CD8-positive, alpha-beta T cell (primary cell): ENCODE measurements at regions of chr5 and their contacts with region 1.

Region 1: DNA sequence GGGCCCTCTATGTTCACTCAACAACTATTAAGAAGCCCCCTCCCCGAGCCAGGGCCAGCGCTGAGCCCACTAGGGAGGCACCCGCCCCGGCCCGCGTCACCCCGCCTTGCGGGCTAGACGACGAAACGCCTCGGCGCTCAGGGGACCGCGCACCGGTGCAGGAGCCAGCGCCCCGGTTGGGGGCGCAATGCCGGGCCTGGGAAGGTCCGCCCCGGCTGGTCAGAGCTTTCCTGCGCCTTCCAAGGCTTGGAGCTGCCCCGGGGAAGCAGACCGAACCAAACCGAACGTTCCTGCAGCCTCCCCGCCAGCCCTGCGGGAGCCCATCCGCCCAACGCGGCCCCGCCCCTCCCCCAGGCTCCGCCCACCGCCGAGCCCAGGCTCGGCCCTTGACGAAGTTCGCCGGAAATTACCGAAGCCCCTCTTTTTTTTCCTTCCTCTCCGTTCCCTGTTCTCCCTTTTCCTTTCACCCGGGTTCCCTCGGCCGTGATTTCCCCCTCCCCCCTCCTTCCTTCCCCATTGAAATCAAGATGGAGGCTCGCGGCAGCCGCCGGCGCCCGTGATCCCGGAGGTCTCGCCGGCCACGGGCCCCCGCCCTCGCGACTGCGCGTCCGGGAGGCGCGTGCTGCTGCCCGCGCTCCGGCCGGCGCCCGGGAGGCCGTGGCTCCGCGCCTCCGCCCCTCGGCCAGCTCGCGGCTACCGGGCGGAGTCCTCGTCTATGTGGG is at the start of gene TRIO:
- DNase-seq: peak; percentile 32 to 88 (median 77)
- ATAC-seq: peak; percentile 71
- H3K4me3 ChIP-seq: peak within 1 kb of the TSS; percentile 56 to 93
- H3K4me3 Mint-ChIP-seq: peak within 1 kb of the TSS; percentile 84
- H3K27ac ChIP-seq: no peak within 1 kb of the TSS
- H3K27ac Mint-ChIP-seq: no peak within 1 kb of the TSS
- H3K4me1 ChIP-seq: peaks cover 13% of the 10 kb centered on the region
- H3K4me1 Mint-ChIP-seq: peaks cover 11% of the 10 kb centered on the region
- H3K27me3 ChIP-seq: peaks cover 0 to 3% of the 10 kb centered on the region in 2 experiments
- H3K27me3 Mint-ChIP-seq: peaks cover 40% of the 10 kb centered on the region
- CTCF ChIP-seq: peak; percentile 31
- total RNA-seq, gene TRIO: 3.4 to 6.5 TPM

Region 2: DNA sequence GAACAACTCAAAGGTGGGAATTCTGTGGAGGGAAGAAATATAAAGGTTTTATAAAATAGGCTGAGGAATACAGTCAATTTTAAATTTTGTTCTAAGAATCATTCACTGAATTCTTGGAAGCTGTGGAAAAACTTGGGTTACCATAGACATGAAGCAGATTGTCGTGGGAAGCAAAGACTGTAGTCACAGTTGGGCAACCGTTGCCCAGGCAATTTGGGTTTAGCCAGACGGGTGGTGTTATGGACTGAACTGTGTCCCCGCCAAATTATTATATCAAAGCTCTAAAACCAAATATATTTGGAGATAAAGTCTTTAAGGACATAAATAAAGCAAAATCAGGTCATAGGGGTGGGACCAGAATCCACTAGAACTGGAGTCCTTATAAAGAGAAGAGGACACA is 1775.0 kb before region 1 on chr5:
- CTCF ChIA-PET with region 1: no interaction called
- POLR2A ChIA-PET with region 1: no interaction called
- intact Hi-C with region 1: no loop called
- DNase-seq: no peak
- ATAC-seq: no peak
- H3K4me3 ChIP-seq: no peak overlapping the region
- H3K4me3 Mint-ChIP-seq: no peak overlapping the region
- H3K27ac ChIP-seq: no peak overlapping the region
- H3K27ac Mint-ChIP-seq: no peak overlapping the region
- H3K4me1 ChIP-seq: no peaks in the 10 kb centered on the region
- H3K4me1 Mint-ChIP-seq: no peaks in the 10 kb centered on the region
- H3K27me3 ChIP-seq: no peaks in the 10 kb centered on the region
- H3K27me3 Mint-ChIP-seq: no peaks in the 10 kb centered on the region
- CTCF ChIP-seq: no peak

Region 3: DNA sequence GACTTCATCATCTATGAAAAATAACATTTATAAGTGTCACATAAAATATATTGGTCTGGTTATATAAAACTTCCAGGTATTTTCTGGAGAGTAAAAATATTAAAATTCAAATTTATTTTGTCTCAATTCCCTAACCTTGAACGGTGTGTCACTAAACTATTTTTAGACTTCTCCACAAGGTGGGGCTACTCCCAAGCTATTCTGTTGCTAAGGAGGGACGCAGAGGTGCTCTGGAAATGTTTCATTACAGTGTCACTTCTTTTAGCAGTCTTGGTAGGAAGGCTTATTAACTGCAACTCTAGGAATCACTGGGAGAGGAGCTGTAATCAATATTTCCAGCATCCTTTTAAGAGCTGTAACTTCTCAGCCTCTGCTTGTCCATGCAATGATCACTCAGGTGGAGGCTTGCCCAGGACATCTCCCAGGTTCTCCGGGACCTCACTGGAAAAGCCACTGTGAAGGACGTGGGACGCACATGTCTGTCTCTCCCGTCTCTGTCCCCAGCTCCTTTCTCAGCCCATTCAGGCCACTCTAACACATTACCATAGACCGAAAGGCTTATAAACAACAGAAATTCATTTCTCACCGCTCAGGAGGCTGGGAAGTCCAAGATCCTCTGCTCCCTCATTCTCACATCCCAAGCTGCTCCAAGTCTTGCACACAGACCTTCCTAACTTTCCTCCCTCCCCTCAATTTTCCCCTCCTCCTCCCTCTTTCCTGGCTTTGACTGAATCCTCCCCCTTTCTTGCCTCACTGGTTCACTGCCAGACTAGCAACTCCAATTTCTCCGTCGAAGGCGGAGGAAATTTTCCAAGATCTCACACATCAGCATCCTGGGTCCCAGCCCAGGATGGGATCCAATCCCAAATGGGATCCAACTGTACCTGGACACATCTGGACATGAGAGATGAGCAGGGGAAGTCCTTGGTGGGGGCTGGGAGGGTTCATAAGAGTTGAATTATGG is 165.8 kb before region 1 on chr5:
- CTCF ChIA-PET with region 1: no interaction called
- POLR2A ChIA-PET with region 1: no interaction called
- intact Hi-C with region 1: no loop called
- DNase-seq: no peak
- ATAC-seq: no peak
- H3K4me3 ChIP-seq: no peak overlapping the region
- H3K4me3 Mint-ChIP-seq: no peak overlapping the region
- H3K27ac ChIP-seq: no peak overlapping the region
- H3K27ac Mint-ChIP-seq: no peak overlapping the region
- H3K4me1 ChIP-seq: no peaks in the 10 kb centered on the region
- H3K4me1 Mint-ChIP-seq: no peaks in the 10 kb centered on the region
- H3K27me3 ChIP-seq: no peaks in the 10 kb centered on the region
- H3K27me3 Mint-ChIP-seq: peaks cover 10% of the 10 kb centered on the region
- CTCF ChIP-seq: no peak

Region 4: DNA sequence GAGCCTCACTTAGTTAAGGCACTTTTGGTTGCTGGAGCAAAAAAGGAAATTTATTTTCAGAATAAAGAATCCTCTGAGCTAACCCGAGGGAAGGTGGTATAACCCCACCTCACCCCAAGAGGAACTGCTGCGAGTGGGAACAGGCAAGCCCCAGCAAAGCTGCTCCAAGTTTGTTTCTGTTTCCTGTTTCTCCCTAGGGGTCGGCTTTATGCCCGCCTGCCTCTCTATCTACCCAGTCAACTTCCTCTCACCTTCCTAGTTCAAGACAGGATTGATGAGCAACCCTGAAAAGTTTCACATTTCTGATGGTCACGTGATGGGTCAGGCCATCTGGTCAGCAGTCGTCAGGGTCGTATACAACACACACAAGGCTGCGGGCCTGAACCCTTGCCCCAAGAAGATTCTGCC is 31.2 kb after region 1 on chr5:
- CTCF ChIA-PET with region 1: no interaction called
- POLR2A ChIA-PET with region 1: no interaction called
- intact Hi-C with region 1: no loop called
- DNase-seq: peak in 1 of 9 experiments; percentile 8
- ATAC-seq: no peak
- H3K4me3 ChIP-seq: no peak overlapping the region
- H3K4me3 Mint-ChIP-seq: no peak overlapping the region
- H3K27ac ChIP-seq: no peak overlapping the region
- H3K27ac Mint-ChIP-seq: no peak overlapping the region
- H3K4me1 ChIP-seq: no peaks in the 10 kb centered on the region
- H3K4me1 Mint-ChIP-seq: peaks cover 3% of the 10 kb centered on the region
- H3K27me3 ChIP-seq: no peaks in the 10 kb centered on the region
- H3K27me3 Mint-ChIP-seq: peaks cover 18% of the 10 kb centered on the region
- CTCF ChIP-seq: no peak

Region 5: GRCh38 chr5:14264604-14265316 is 121.8 kb after region 1 on chr5:
- CTCF ChIA-PET with region 1: no interaction called
- POLR2A ChIA-PET with region 1: no interaction called
- intact Hi-C with region 1: loop called in 1 of 2 experiments (anchors 5 kb)
- DNase-seq: peak; percentile 16 to 83 (median 71)
- ATAC-seq: peak; percentile 97
- H3K4me3 ChIP-seq: peak overlapping the region; percentile 6 to 31
- H3K4me3 Mint-ChIP-seq: peak overlapping the region; percentile 62
- H3K27ac ChIP-seq: no peak overlapping the region
- H3K27ac Mint-ChIP-seq: no peak overlapping the region
- H3K4me1 ChIP-seq: peaks cover 6% of the 10 kb centered on the region
- H3K4me1 Mint-ChIP-seq: peaks cover 7% of the 10 kb centered on the region
- H3K27me3 ChIP-seq: no peaks in the 10 kb centered on the region
- H3K27me3 Mint-ChIP-seq: peaks cover 22% of the 10 kb centered on the region
- CTCF ChIP-seq: no peak

Region 6: DNA sequence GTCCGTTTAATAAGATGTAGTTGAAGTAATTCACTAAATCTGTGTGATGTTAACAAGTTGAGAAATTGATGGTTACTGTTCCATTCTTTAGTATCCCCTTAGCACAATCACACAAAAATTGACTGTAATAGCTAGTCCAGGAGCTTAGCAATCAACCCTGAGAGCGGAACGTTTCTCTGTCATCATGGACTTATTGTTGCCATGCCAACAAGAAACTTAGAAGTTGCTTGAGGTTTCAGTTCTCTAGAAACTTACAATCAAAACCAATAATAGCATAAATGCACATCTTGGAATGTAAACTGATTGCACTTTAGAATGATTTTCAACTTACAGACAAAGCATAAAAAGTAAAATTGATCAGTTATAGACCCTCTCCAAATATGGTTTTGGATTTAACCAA is 854.0 kb after region 1 on chr5:
- CTCF ChIA-PET with region 1: no interaction called
- POLR2A ChIA-PET with region 1: no interaction called
- intact Hi-C with region 1: loop called in 1 of 2 experiments (anchors 10 kb)
- DNase-seq: peak in 1 of 9 experiments; percentile 35
- ATAC-seq: no peak
- H3K4me3 ChIP-seq: no peak overlapping the region
- H3K4me3 Mint-ChIP-seq: no peak overlapping the region
- H3K27ac ChIP-seq: no peak overlapping the region
- H3K27ac Mint-ChIP-seq: no peak overlapping the region
- H3K4me1 ChIP-seq: peaks cover 4% of the 10 kb centered on the region
- H3K4me1 Mint-ChIP-seq: peaks cover 14% of the 10 kb centered on the region
- H3K27me3 ChIP-seq: no peaks in the 10 kb centered on the region
- H3K27me3 Mint-ChIP-seq: no peaks in the 10 kb centered on the region
- CTCF ChIP-seq: no peak